ENCODE measurements at regions of chr11 and their contacts with region 1.

Region 1: GRCh38 chr11:19903620-19904069 is 191.0 kb downstream of the NAV2 start:
- DNase-seq: peak in 7 of 9 experiments; percentile 14 to 53 (median 42)
- ATAC-seq: no peak
- H3K4me3 ChIP-seq: no peak overlapping the region
- H3K4me3 Mint-ChIP-seq: no peak overlapping the region
- H3K27ac ChIP-seq: no peak overlapping the region
- H3K27ac Mint-ChIP-seq: no peak overlapping the region
- H3K4me1 ChIP-seq: no peaks in the 10 kb centered on the region
- H3K4me1 Mint-ChIP-seq: no peaks in the 10 kb centered on the region
- H3K27me3 ChIP-seq: no peaks in the 10 kb centered on the region
- H3K27me3 Mint-ChIP-seq: no peaks in the 10 kb centered on the region
- CTCF ChIP-seq: peak; percentile 31

Region 2: DNA sequence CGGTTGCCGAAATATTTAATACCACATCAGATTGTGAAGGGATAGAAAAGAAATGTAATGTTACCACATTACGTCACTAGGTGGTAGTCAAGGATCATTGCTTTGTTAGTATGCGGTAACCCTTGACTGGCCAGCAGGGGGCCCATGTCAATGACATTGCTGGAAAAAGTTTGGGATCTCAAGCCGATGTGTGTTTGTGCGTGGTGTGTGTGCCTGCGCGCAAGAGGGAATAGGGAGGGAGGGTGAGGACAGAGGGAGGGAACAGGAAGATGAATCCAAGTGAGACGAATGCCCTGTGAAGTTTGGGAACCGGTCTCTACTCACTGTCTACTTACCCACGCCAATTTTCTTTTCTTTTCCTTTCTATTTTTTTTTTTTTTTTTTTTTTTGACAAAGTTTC is 832.4 kb before region 1 on chr11:
- CTCF ChIA-PET with region 1: no interaction called
- POLR2A ChIA-PET with region 1: no interaction called
- intact Hi-C with region 1: loop called in 1 of 2 experiments (anchors 10 kb)
- DNase-seq: peak in 8 of 9 experiments; percentile 15 to 81 (median 46)
- ATAC-seq: peak; percentile 90
- H3K4me3 ChIP-seq: no peak overlapping the region
- H3K4me3 Mint-ChIP-seq: peak overlapping the region; percentile 38
- H3K27ac ChIP-seq: no peak overlapping the region
- H3K27ac Mint-ChIP-seq: no peak overlapping the region
- H3K4me1 ChIP-seq: peaks cover 4% of the 10 kb centered on the region
- H3K4me1 Mint-ChIP-seq: peaks cover 5% of the 10 kb centered on the region
- H3K27me3 ChIP-seq: no peaks in the 10 kb centered on the region
- H3K27me3 Mint-ChIP-seq: peaks cover 18% of the 10 kb centered on the region
- CTCF ChIP-seq: peak; percentile 90

Region 3: DNA sequence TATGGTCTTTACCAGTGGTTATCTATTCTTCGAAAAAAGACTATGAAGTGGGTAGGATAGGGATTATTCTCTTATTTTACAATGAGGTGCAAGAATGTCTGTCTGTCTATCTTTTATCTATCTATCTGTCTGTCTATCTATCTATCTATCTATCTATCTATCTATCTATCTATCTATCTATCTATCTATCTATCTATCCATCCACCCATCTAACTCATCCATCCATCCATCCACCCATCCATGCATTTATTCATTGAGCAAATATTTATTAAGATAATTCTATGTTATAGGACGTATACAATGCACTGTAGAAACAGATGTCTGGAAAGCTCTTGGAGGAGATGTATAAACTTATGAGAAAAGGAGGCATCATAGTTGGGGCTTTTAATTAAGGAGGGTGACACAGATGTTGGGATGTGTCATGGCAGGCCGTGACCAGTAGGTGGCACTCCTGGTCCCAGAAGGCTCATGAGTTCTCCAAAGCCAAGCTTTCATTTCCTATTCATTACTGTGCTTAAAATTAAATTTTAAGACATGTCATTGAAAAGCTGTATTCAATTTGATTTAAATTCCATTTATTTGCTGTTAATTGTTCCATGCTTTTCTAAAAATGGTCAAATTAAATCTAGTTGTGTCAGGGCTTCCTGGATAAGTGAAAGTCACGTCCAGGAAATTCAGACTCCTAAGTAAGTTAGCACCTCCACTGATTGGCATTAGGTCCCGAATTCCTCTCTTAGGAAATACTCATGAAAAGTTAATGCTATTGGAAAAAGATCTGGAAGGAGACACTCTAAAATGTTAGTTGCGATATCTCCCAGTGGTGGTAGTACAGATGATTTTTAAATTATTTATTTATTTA is 643.9 kb before region 1 on chr11:
- CTCF ChIA-PET with region 1: no interaction called
- POLR2A ChIA-PET with region 1: no interaction called
- intact Hi-C with region 1: loop called in 1 of 2 experiments (anchors 10 kb)
- DNase-seq: peak; percentile 24 to 73 (median 63)
- ATAC-seq: peak; percentile 75
- H3K4me3 ChIP-seq: no peak overlapping the region
- H3K4me3 Mint-ChIP-seq: no peak overlapping the region
- H3K27ac ChIP-seq: no peak overlapping the region
- H3K27ac Mint-ChIP-seq: no peak overlapping the region
- H3K4me1 ChIP-seq: no peaks in the 10 kb centered on the region
- H3K4me1 Mint-ChIP-seq: no peaks in the 10 kb centered on the region
- H3K27me3 ChIP-seq: no peaks in the 10 kb centered on the region
- H3K27me3 Mint-ChIP-seq: peaks cover 4% of the 10 kb centered on the region
- CTCF ChIP-seq: peak; percentile 90

Region 4: GRCh38 chr11:20056109-20056949 is 152.7 kb after region 1 on chr11:
- CTCF ChIA-PET with region 1: no interaction called
- POLR2A ChIA-PET with region 1: no interaction called
- intact Hi-C with region 1: no loop called
- DNase-seq: no peak
- ATAC-seq: no peak
- H3K4me3 ChIP-seq: no peak overlapping the region
- H3K4me3 Mint-ChIP-seq: no peak overlapping the region
- H3K27ac ChIP-seq: no peak overlapping the region
- H3K27ac Mint-ChIP-seq: no peak overlapping the region
- H3K4me1 ChIP-seq: no peaks in the 10 kb centered on the region
- H3K4me1 Mint-ChIP-seq: no peaks in the 10 kb centered on the region
- H3K27me3 ChIP-seq: no peaks in the 10 kb centered on the region
- H3K27me3 Mint-ChIP-seq: peaks cover 2% of the 10 kb centered on the region
- CTCF ChIP-seq: no peak